ENCODE measurements at regions of chr17 and their contacts with region 1.

Region 1: DNA sequence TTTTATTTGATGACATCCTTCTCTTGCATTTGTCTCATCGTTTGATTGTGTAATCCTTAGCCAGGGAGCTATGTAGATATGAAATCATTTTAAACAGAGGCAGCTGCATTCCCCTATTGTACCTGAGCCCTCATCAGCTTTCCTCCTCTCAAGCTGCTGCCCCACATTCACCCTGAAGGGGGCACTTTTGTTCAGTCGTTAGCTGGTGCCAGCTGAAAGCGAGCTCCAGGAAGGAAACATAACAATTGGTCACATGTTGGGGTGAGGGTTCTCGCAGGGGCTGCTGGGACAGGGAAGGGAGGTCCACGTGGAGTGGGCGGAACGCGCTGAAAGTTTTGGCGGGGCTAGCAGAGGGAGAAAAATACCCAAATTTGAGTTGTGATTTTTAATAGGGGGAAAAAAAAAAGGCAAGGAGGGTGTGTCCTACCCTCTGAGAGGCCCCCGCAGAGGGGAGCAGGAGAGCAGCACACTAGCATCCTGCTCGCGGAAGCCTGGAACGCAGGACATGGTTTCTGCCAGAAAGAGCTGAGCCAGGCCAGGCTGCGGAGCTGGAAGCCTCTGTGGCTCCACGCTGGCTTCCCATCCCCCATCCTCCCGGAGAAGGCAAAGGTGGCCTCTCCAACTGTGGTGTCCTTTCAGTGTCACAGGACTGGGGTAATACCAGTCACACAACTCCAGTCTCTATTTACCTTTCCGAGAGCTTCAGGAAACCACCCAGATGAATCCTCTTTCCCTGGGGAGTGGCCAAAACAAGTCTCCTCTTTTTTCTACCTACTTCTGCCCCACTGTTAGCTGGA is 8.5 kb upstream of the MSL1 start:
- DNase-seq: peak; percentile 98
- H3K4me3 Mint-ChIP-seq: peak overlapping the region; percentile 81
- H3K27ac Mint-ChIP-seq: peak overlapping the region; percentile 91
- H3K4me1 Mint-ChIP-seq: peaks cover 52% of the 10 kb centered on the region
- H3K27me3 Mint-ChIP-seq: no peaks in the 10 kb centered on the region

Region 2: GRCh38 chr17:39863918-39864746 is 249.2 kb before region 1 on chr17 and contains the start of gene IKZF3:
- CTCF ChIA-PET with region 1: no interaction called
- intact Hi-C with region 1: no loop called
- DNase-seq: peak; percentile 94
- H3K4me3 Mint-ChIP-seq: peak within 1 kb of the TSS; percentile 92
- H3K27ac Mint-ChIP-seq: peak within 1 kb of the TSS; percentile 95
- H3K4me1 Mint-ChIP-seq: peaks cover 61% of the 10 kb centered on the region
- H3K27me3 Mint-ChIP-seq: no peaks in the 10 kb centered on the region
- total RNA-seq, gene IKZF3: 34.2 to 36.1 TPM

Region 3: GRCh38 chr17:40062329-40063186 is 50.8 kb before region 1 on chr17 and contains the start of gene THRA:
- CTCF ChIA-PET with region 1: interaction called, 90 read pairs
- intact Hi-C with region 1: loop called (anchors 1 kb)
- DNase-seq: peak; percentile 69
- H3K4me3 Mint-ChIP-seq: peak within 1 kb of the TSS; percentile 77
- H3K27ac Mint-ChIP-seq: no peak within 1 kb of the TSS
- H3K4me1 Mint-ChIP-seq: peaks cover 44% of the 10 kb centered on the region
- H3K27me3 Mint-ChIP-seq: peaks cover 2% of the 10 kb centered on the region
- total RNA-seq, gene THRA: 10.2 to 11.2 TPM

Region 4: DNA sequence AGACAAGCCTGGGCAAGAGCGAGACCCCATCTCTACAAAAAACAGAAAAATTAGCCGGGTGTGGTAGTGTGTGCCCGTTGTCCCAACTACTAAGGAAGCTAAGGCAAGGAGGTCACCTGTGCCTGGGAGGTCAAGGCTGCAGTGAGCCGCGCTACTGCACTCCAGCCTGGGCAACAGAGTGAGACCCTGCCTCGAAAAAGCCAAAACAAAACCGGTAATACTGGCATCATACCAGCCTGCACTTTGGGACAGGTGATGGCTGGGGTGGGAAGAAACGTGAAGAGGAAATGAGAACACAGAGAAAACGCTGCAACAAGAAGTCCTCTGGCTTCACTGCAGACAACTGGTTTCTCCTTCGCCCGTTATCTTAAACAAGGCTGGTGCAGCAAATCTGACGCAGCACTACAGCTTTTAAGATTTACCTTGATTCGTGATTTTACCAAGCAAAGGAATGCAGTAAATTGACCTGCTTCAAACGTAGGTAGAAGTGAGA is 26.3 kb after region 1 on chr17:
- CTCF ChIA-PET with region 1: interaction called, 25 read pairs
- intact Hi-C with region 1: loop called (anchors 1 kb)
- DNase-seq: no peak
- H3K4me3 Mint-ChIP-seq: peak overlapping the region; percentile 85
- H3K27ac Mint-ChIP-seq: peak overlapping the region; percentile 98
- H3K4me1 Mint-ChIP-seq: peaks cover 42% of the 10 kb centered on the region
- H3K27me3 Mint-ChIP-seq: no peaks in the 10 kb centered on the region

Region 5: GRCh38 chr17:40168262-40168832 is 55.0 kb after region 1 on chr17:
- CTCF ChIA-PET with region 1: interaction called, 116 read pairs
- intact Hi-C with region 1: loop called (anchors 1 kb)
- DNase-seq: peak; percentile 44
- H3K4me3 Mint-ChIP-seq: no peak overlapping the region
- H3K27ac Mint-ChIP-seq: peak overlapping the region; percentile 77
- H3K4me1 Mint-ChIP-seq: peaks cover 7% of the 10 kb centered on the region
- H3K27me3 Mint-ChIP-seq: no peaks in the 10 kb centered on the region

Region 6: DNA sequence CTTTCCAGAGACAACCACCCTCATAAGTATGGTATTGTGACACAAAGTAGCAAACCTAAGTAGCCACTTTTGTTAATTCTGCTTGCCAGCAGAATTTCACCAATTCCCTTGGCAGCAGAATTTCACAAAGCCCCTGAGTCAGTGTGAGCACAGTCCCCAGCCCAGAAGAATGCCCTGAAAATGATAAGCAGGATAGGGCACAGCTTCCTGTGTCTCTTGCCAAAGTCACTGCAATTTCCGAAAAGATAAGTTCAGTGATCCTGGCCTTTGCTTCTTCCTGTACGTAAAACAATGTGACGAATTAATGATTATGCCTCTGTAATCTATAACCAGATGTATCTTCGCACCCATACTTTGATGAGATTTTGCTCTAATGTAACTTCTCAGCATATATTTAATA is 89.8 kb after region 1 on chr17:
- CTCF ChIA-PET with region 1: interaction called, 11 read pairs
- intact Hi-C with region 1: no loop called
- DNase-seq: no peak
- H3K4me3 Mint-ChIP-seq: no peak overlapping the region
- H3K27ac Mint-ChIP-seq: no peak overlapping the region
- H3K4me1 Mint-ChIP-seq: no peaks in the 10 kb centered on the region
- H3K27me3 Mint-ChIP-seq: no peaks in the 10 kb centered on the region

Measured in activated naive CD4-positive, alpha-beta T cell treated with anti-CD3 and anti-CD28 coated beads for 36 hours (primary cell).